IMR-90 (cell line): ENCODE measurements at regions of chr11 and their contacts with region 1.

Region 1: GRCh38 chr11:35485656-35486322 is 39.6 kb downstream of the PAMR1 start:
- DNase-seq: peak; percentile 79
- ATAC-seq: peak; percentile 81
- H3K4me3 ChIP-seq: no peak overlapping the region
- H3K27ac ChIP-seq: no peak overlapping the region
- H3K4me1 ChIP-seq: peaks cover 17% of the 10 kb centered on the region
- H3K27me3 ChIP-seq: no peaks in the 10 kb centered on the region
- CTCF ChIP-seq: peak; percentile 90
- POLR2A ChIP-seq: no peak
- RAD21 ChIP-seq: peak; percentile 84

Region 2: GRCh38 chr11:35662649-35663407 is 177.0 kb after region 1 on chr11 and contains the start of gene TRIM44:
- CTCF ChIA-PET with region 1: no interaction called
- POLR2A ChIA-PET with region 1: no interaction called
- dilution Hi-C with region 1: no loop called
- in situ Hi-C with region 1: no loop called
- intact Hi-C with region 1: loop called (anchors 2 kb)
- DNase-seq: peak; percentile 81
- ATAC-seq: peak; percentile 96
- H3K4me3 ChIP-seq: peak within 1 kb of the TSS; percentile 68
- H3K27ac ChIP-seq: peak within 1 kb of the TSS; percentile 94
- H3K4me1 ChIP-seq: peaks cover 11% of the 10 kb centered on the region
- H3K27me3 ChIP-seq: no peaks in the 10 kb centered on the region
- CTCF ChIP-seq: no peak
- POLR2A ChIP-seq: peak; percentile 79
- RAD21 ChIP-seq: no peak
- total RNA-seq, gene TRIM44: 99.4 and 104 TPM in 2 replicates